MCF 10A (cell line): ENCODE measurements at regions of chr12 and their contacts with region 1.

Region 1: GRCh38 chr12:19739183-19739776 is 300.0 kb downstream of the AEBP2 start:
- DNase-seq: peak; percentile 75
- H3K4me3 Mint-ChIP-seq: no peak overlapping the region
- H3K27ac Mint-ChIP-seq: no peak overlapping the region
- H3K4me1 Mint-ChIP-seq: no peaks in the 10 kb centered on the region
- H3K27me3 Mint-ChIP-seq: peaks cover 22% of the 10 kb centered on the region
- CTCF ChIP-seq: peak; percentile 57

Region 2: DNA sequence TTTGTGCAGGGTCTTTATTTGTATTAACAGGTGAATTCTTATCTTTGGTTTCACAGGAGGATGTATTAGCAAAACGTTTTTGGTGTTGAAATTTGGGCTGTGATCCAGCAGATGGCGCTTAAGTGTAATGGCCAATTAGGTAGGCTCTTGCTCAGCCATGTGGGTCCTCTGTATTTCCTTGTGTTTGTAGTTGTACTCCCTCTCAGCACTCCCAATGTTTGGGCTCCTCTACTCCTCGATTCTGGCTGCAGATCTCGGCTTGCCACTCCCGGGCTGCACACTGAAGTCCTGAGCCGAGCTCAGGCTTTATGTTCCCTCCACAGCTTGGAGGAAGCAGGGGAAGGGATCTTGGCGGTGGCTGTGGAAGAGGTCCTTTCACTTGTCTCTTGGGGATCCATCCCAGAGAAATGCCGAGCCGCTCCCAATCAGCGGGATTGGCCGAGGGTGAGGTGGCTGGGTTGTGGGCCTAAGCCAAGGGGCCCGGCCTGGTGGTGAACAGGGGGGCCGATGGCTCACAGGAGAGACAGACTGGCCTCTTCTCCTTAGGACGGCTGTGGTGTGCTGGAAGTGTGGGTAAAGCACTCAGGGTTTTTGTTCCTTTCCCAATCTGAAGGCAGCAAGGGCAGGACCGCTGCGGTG is 166.2 kb before region 1 on chr12:
- CTCF ChIA-PET with region 1: no interaction called
- POLR2A ChIA-PET with region 1: no interaction called
- intact Hi-C with region 1: loop called (anchors 2 kb)
- DNase-seq: peak; percentile 76
- H3K4me3 Mint-ChIP-seq: no peak overlapping the region
- H3K27ac Mint-ChIP-seq: no peak overlapping the region
- H3K4me1 Mint-ChIP-seq: peaks cover 10% of the 10 kb centered on the region
- H3K27me3 Mint-ChIP-seq: no peaks in the 10 kb centered on the region
- CTCF ChIP-seq: peak; percentile 64

Region 3: GRCh38 chr12:19749906-19750650 is 10.8 kb after region 1 on chr12:
- CTCF ChIA-PET with region 1: interaction called, 13 read pairs
- POLR2A ChIA-PET with region 1: no interaction called
- intact Hi-C with region 1: no loop called
- DNase-seq: no peak
- H3K4me3 Mint-ChIP-seq: no peak overlapping the region
- H3K27ac Mint-ChIP-seq: no peak overlapping the region
- H3K4me1 Mint-ChIP-seq: peaks cover under 1% of the 10 kb centered on the region
- H3K27me3 Mint-ChIP-seq: peaks cover 9% of the 10 kb centered on the region
- CTCF ChIP-seq: no peak

Region 4: GRCh38 chr12:20220339-20220738 is 481.1 kb after region 1 on chr12:
- CTCF ChIA-PET with region 1: interaction called, 11 read pairs
- POLR2A ChIA-PET with region 1: no interaction called
- intact Hi-C with region 1: loop called (anchors 1 kb)
- DNase-seq: peak; percentile 61
- H3K4me3 Mint-ChIP-seq: no peak overlapping the region
- H3K27ac Mint-ChIP-seq: no peak overlapping the region
- H3K4me1 Mint-ChIP-seq: no peaks in the 10 kb centered on the region
- H3K27me3 Mint-ChIP-seq: peaks cover 32% of the 10 kb centered on the region
- CTCF ChIP-seq: peak; percentile 25

Region 5: GRCh38 chr12:20601668-20602280 is 862.5 kb after region 1 on chr12:
- CTCF ChIA-PET with region 1: interaction called, 5 read pairs
- POLR2A ChIA-PET with region 1: no interaction called
- intact Hi-C with region 1: loop called (anchors 5 kb)
- DNase-seq: peak; percentile 30
- H3K4me3 Mint-ChIP-seq: no peak overlapping the region
- H3K27ac Mint-ChIP-seq: no peak overlapping the region
- H3K4me1 Mint-ChIP-seq: no peaks in the 10 kb centered on the region
- H3K27me3 Mint-ChIP-seq: peaks cover 36% of the 10 kb centered on the region
- CTCF ChIP-seq: peak; percentile 29